K562 (cell line): ENCODE measurements at regions of chr4 and their contacts with region 1.

Region 1: GRCh38 chr4:145234091-145234706 is 53.8 kb upstream of the OTUD4 start:
- DNase-seq: peak; percentile 42 to 77 (median 55)
- ATAC-seq: peak; percentile 100
- H3K4me3 ChIP-seq: no peak overlapping the region
- H3K27ac ChIP-seq: no peak overlapping the region
- H3K4me1 ChIP-seq: no peaks in the 10 kb centered on the region; a peak in 1 of 5 replicates
- H3K27me3 ChIP-seq: no peaks in the 10 kb centered on the region; a peak in 2 of 5 replicates
- CTCF ChIP-seq: peak; percentile 73 to 83 (median 74)
- EP300 ChIP-seq: no peak
- POLR2A ChIP-seq: no peak
- RAD21 ChIP-seq: peak; percentile 74 to 81

Region 2: DNA sequence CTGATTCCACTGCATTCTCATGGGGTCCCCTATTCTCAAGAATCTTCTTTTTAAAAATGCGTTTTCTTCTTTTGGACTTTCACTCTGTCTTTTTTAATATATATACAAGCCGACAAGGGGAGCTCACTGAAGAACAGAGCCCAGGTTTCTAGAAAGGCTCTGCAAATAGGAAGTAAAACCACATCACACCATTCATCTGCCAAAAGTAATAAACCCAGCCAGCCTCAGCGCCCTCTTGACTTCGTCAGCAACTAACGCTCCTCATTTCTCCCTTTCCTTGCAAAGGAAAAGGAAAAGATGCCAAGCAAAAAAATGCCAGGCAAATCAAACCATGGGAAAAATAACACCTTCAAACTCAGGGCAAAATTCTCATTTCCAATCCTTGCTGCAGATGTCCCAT is 451.9 kb before region 1 on chr4:
- CTCF ChIA-PET with region 1: no interaction called
- POLR2A ChIA-PET with region 1: no interaction called
- in situ Hi-C with region 1: no loop called
- intact Hi-C with region 1: no loop called
- DNase-seq: no peak
- ATAC-seq: no peak
- H3K4me3 ChIP-seq: no peak overlapping the region
- H3K27ac ChIP-seq: no peak overlapping the region
- H3K4me1 ChIP-seq: no peaks in the 10 kb centered on the region
- H3K27me3 ChIP-seq: no peaks in the 10 kb centered on the region
- CTCF ChIP-seq: no peak
- EP300 ChIP-seq: no peak
- POLR2A ChIP-seq: no peak
- RAD21 ChIP-seq: no peak

Region 3: GRCh38 chr4:144948009-144948408 is 286.2 kb before region 1 on chr4:
- CTCF ChIA-PET with region 1: no interaction called
- POLR2A ChIA-PET with region 1: no interaction called
- in situ Hi-C with region 1: no loop called
- intact Hi-C with region 1: no loop called
- DNase-seq: no peak
- ATAC-seq: no peak
- H3K4me3 ChIP-seq: no peak overlapping the region
- H3K27ac ChIP-seq: no peak overlapping the region
- H3K4me1 ChIP-seq: no peaks in the 10 kb centered on the region
- H3K27me3 ChIP-seq: no peaks in the 10 kb centered on the region
- CTCF ChIP-seq: no peak
- EP300 ChIP-seq: no peak
- POLR2A ChIP-seq: no peak
- RAD21 ChIP-seq: no peak

Region 4: GRCh38 chr4:145557720-145558119 is 323.5 kb after region 1 on chr4:
- CTCF ChIA-PET with region 1: no interaction called
- POLR2A ChIA-PET with region 1: no interaction called
- in situ Hi-C with region 1: loop called (anchors 25 kb)
- intact Hi-C with region 1: loop called (anchors 1 kb)
- DNase-seq: peak; percentile 52 to 71 (median 67)
- ATAC-seq: peak; percentile 99
- H3K4me3 ChIP-seq: no peak overlapping the region
- H3K27ac ChIP-seq: no peak overlapping the region
- H3K4me1 ChIP-seq: no peaks in the 10 kb centered on the region
- H3K27me3 ChIP-seq: peaks cover 0 to 4% of the 10 kb centered on the region in 2 experiments; a peak in 1 of 5 replicates
- CTCF ChIP-seq: peak; percentile 86 to 99 (median 99)
- EP300 ChIP-seq: no peak
- POLR2A ChIP-seq: no peak
- RAD21 ChIP-seq: peak; percentile 57 to 65

Region 5: DNA sequence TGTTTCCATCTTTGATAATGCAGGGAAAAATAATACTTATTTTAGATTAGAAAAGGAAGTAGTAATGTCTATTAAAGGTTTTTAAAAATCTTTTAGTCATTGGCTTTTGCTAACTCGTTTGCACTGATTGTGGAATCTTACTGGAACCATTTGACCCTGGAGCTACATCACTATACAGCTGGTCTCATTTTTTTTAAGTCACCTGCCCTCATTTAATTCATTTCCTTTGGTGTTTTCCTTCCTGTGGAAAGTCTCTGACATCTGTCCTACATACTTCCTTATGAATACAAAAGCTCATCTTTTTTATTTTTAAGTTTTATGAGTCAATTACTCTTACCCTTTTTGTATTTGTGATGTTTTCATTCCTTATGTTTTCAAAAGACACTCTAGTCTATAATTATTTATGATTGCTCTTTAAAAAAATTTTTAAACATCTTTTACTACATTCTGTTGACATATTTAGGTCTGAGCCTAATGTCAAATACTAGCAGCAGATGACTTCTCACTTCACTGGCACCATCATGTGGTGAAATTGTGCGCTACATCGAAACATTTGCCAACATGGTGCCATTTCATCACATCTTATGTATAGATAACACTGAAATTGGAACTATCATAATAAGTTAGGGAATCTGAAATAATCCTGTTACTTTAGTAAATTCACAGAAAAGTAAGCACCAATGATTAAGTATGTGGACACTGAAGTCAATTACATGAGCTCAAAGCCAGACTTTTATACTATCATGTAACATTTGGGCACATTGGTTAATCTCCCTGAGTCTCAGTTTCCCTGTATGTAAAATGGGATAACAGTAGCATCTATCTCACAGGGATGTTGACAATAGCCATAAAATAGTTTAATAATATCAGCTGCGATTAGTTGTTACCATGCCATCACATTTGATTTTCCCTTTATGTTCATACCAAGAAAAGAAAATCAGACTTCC is 375.6 kb after region 1 on chr4:
- CTCF ChIA-PET with region 1: interaction called, 4 read pairs
- POLR2A ChIA-PET with region 1: no interaction called
- in situ Hi-C with region 1: no loop called
- intact Hi-C with region 1: loop called (anchors 2 kb)
- DNase-seq: peak; percentile 12 to 42 (median 28)
- ATAC-seq: peak; percentile 61; the same call in 1 of the 3 replicates
- H3K4me3 ChIP-seq: no peak overlapping the region
- H3K27ac ChIP-seq: no peak overlapping the region
- H3K4me1 ChIP-seq: no peaks in the 10 kb centered on the region
- H3K27me3 ChIP-seq: peaks cover 0 to 6% of the 10 kb centered on the region in 2 experiments; a peak in 2 of 5 replicates
- CTCF ChIP-seq: peak; percentile 37 to 54 (median 47); a peak in 5 of 6 replicates
- EP300 ChIP-seq: no peak
- POLR2A ChIP-seq: no peak
- RAD21 ChIP-seq: peak; percentile 31 to 50; a peak in 3 of 4 replicates

Region 6: DNA sequence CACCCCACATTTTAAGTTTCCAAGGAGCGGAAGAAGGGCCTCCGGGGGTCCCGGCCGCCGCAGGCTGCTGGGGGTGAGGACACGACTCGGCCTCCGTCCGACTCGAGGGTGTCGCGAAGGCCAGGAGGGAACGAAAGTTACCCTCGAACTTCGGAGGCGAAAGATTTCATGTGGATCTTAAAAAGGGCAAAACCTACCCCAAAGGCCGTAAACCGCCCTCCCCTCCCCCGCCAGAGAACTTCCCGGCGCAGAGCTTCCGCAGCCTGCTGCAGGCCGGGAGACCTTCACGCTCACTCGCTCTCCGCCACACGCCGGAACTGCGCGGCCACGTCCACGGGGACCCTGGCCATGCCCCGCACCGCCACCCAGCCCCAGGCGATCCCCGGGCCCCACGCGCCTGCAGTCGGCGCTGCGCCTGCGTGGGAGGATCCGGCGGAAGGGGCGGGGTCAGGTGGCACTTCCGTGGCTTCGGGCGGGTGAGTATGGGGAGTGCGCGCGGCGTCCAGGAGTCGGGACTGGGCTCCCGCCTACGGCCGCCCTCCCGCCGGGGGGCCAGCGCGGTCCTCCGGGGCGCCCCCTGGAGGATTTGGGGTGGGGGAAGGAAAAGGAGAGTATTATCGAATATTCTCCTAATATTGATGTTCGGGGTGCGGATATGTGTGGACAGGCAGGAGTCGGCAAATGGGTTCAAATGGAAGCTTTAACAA is 384.9 kb after region 1 on chr4 and contains the start of gene MMAA:
- CTCF ChIA-PET with region 1: no interaction called
- POLR2A ChIA-PET with region 1: no interaction called
- in situ Hi-C with region 1: no loop called
- intact Hi-C with region 1: loop called (anchors 2 kb)
- DNase-seq: peak; percentile 94 to 96 (median 96)
- ATAC-seq: peak; percentile 99
- H3K4me3 ChIP-seq: peak within 1 kb of the TSS; percentile 70
- H3K27ac ChIP-seq: peak within 1 kb of the TSS; percentile 90
- H3K4me1 ChIP-seq: peaks cover 0 to 5% of the 10 kb centered on the region in 2 experiments; a peak in 2 of 5 replicates
- H3K27me3 ChIP-seq: no peaks in the 10 kb centered on the region
- CTCF ChIP-seq: peak; percentile 68 to 82 (median 74)
- EP300 ChIP-seq: no peak
- POLR2A ChIP-seq: peak; percentile 93
- RAD21 ChIP-seq: 0 out of 4 replicates have a peak, but pooled peaks of 1 of the 2 experiments have one; percentile 31
- polyA plus RNA-seq, gene MMAA: 0.96 to 1.5 TPM

Region 7: GRCh38 chr4:145891958-145892357 is 657.8 kb after region 1 on chr4:
- CTCF ChIA-PET with region 1: no interaction called
- POLR2A ChIA-PET with region 1: no interaction called
- in situ Hi-C with region 1: no loop called
- intact Hi-C with region 1: no loop called
- DNase-seq: peak; percentile 11 to 21 (median 15)
- ATAC-seq: peak; percentile 91
- H3K4me3 ChIP-seq: no peak overlapping the region
- H3K27ac ChIP-seq: no peak overlapping the region
- H3K4me1 ChIP-seq: no peaks in the 10 kb centered on the region
- H3K27me3 ChIP-seq: peaks cover 0 to 13% of the 10 kb centered on the region in 2 experiments; a peak in 2 of 5 replicates
- CTCF ChIP-seq: peak; percentile 34 to 53 (median 51)
- EP300 ChIP-seq: no peak
- POLR2A ChIP-seq: no peak
- RAD21 ChIP-seq: no peak